MCF 10A (cell line): ENCODE measurements at regions of chr6 and their contacts with region 1.

Region 1: GRCh38 chr6:45714741-45715507 is 300.7 kb downstream of the CLIC5 start:
- DNase-seq: peak; percentile 87
- H3K4me3 Mint-ChIP-seq: no peak overlapping the region
- H3K27ac Mint-ChIP-seq: peak overlapping the region; percentile 13
- H3K4me1 Mint-ChIP-seq: peaks cover 11% of the 10 kb centered on the region
- H3K27me3 Mint-ChIP-seq: no peaks in the 10 kb centered on the region
- CTCF ChIP-seq: peak; percentile 87

Region 2: DNA sequence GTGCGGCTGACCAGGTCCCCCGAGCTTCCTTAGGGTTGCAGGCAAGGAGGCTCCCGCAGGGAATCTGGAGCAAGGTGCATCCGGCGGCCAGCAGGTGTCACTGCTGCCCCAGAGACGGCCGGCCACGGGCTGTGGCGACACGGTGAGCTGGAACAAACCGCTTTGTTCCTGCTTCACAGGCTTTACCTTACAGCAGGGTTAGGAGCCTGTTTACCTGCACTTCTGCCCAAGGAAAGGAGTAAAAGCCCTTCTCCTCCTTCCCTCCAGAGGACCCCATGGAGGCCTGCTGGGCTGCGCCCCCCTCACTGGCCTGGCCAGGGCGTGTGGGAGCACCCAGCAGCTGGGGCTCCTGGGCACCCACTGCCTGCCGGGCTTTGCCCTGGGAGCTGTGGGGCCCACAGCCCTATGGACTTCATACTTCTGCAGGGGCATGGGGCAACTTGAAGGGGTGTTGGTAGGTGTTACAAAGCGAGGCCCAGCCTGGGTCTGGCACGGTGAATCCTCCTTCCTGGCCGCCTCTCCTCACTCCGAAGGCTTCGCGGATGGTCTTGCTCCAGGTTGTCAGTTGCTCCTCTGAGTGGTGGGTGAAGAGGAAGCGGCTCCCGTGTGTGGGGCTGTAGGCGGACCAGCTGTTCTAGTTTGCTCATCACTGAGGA is 1239.0 kb before region 1 on chr6:
- CTCF ChIA-PET with region 1: interaction called, 20 read pairs
- POLR2A ChIA-PET with region 1: interaction called, 3 read pairs
- intact Hi-C with region 1: loop called (anchors 2 kb)
- DNase-seq: peak; percentile 76
- H3K4me3 Mint-ChIP-seq: no peak overlapping the region
- H3K27ac Mint-ChIP-seq: no peak overlapping the region
- H3K4me1 Mint-ChIP-seq: no peaks in the 10 kb centered on the region
- H3K27me3 Mint-ChIP-seq: no peaks in the 10 kb centered on the region
- CTCF ChIP-seq: peak; percentile 95

Region 3: DNA sequence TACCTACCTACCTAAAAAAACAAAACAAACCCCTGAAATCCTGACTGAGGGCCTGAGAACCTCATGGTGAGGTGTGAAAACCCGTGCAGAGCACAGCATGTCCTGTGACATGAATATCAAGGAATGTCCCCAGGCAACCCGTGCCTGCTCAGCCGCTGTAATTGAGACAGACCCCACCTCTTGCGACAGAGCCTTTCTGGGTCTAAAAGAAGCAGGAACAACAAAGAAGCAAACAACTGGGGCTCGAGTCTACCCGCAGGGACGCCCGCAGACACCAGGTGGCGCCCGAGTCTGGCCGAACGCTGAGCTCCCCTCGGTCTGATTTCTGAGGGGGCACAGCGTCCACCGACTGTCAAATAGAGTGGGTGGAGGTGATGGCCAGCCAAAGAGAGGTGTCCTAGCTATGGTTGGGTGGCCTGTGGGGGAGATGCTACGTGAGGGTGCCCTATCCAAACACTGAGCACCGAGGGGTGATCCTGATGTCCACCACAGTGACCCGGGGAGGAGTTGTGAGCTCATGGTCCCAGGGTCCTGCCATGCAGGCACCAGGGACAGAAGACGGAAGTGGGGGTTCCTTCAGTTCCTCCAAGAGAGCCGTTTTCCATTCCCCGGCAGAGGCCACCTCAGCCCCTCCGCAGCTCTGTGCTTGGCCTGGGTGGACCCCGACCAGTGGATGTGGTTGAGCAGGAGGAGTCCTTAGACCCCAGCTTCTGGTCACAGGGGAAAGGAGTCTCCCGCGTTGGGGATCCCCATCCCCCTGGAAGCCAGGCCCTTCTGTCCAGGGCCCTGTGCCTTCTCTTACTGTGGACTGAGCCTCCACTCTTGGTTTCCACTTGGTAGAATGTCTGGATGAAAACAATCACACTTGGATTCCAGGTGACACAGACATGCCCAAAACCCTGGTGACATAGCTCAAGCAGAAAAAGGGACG is 1059.2 kb before region 1 on chr6:
- CTCF ChIA-PET with region 1: interaction called, 48 read pairs
- POLR2A ChIA-PET with region 1: interaction called, 4 read pairs
- intact Hi-C with region 1: loop called (anchors 1 kb)
- DNase-seq: peak; percentile 66
- H3K4me3 Mint-ChIP-seq: peak overlapping the region; percentile 3
- H3K27ac Mint-ChIP-seq: peak overlapping the region; percentile 76
- H3K4me1 Mint-ChIP-seq: peaks cover 13% of the 10 kb centered on the region
- H3K27me3 Mint-ChIP-seq: no peaks in the 10 kb centered on the region
- CTCF ChIP-seq: peak; percentile 97

Region 4: DNA sequence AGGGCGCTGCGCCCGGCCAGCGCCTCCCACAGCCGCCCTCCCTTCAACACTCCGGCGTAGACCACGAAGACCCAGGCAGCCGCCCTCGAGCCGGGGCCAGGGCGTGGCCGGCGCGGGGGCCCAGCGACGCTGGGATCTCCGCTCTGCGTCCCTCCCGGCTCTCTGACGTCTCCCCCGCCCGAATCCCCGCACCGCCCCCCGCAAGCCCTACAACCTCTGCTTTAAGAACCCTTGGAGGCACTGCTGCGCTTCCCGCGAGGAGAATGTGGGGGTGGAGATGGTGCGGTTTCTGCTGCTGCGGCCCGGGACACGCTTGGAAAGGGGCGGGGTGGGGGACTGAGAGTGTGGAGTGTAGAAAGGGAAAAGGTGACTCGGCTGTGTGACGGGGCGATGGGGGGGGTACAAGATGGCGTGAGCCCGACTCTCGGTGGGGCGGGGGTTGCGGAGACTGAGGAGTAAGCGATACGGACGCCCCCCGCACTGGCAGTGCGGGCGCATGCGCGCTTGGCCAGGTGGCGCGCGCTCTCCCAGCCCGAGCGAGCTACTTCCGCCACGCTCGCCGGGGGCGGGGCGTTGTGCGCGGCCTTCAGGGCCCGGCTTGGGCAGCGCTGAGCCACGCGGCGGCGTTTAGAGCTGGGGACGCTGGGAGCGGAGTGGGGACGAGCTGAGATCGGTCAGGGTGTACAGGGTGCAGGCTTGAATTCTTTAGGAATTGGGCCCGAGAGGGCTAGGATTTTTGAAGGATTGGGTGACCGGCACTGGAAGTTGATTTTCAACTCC is 337.2 kb before region 1 on chr6 and contains the start of gene SUPT3H:
- CTCF ChIA-PET with region 1: no interaction called
- POLR2A ChIA-PET with region 1: interaction called, 6 read pairs
- intact Hi-C with region 1: loop called (anchors 5 kb)
- DNase-seq: peak; percentile 91
- H3K4me3 Mint-ChIP-seq: peak within 1 kb of the TSS; percentile 98
- H3K27ac Mint-ChIP-seq: peak within 1 kb of the TSS; percentile 98
- H3K4me1 Mint-ChIP-seq: peaks cover 24% of the 10 kb centered on the region
- H3K27me3 Mint-ChIP-seq: no peaks in the 10 kb centered on the region
- CTCF ChIP-seq: no peak
- total RNA-seq, gene SUPT3H: 12.7 and 14.4 TPM in 2 replicates

Region 5: DNA sequence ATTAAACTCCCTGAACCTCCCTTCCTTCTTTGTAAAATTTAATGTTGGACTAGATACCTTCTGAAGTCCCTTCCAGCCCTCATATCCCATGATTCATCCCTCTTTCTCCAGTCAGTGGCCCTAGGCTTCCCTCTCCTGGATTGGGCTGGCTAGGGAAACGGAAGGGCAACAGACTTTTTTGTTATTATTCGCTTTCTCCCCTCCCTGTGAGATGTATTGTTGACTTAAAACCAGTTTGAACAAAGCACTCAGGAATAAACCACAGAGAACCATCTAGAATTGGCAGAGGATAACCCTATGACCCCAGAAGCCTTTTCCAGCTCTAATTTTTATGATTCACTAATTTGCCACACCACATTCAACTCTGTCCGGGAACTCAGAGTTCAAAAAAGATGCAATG is 97.5 kb before region 1 on chr6:
- CTCF ChIA-PET with region 1: interaction called, 9 read pairs
- POLR2A ChIA-PET with region 1: no interaction called
- intact Hi-C with region 1: loop called (anchors 2 kb)
- DNase-seq: peak; percentile 66
- H3K4me3 Mint-ChIP-seq: no peak overlapping the region
- H3K27ac Mint-ChIP-seq: peak overlapping the region; percentile 40
- H3K4me1 Mint-ChIP-seq: peaks cover 16% of the 10 kb centered on the region
- H3K27me3 Mint-ChIP-seq: no peaks in the 10 kb centered on the region
- CTCF ChIP-seq: peak; percentile 14

Region 6: GRCh38 chr6:45922728-45923351 is 207.9 kb after region 1 on chr6:
- CTCF ChIA-PET with region 1: interaction called, 15 read pairs
- POLR2A ChIA-PET with region 1: no interaction called
- intact Hi-C with region 1: loop called (anchors 2 kb)
- DNase-seq: peak; percentile 73
- H3K4me3 Mint-ChIP-seq: no peak overlapping the region
- H3K27ac Mint-ChIP-seq: peak overlapping the region; percentile 39
- H3K4me1 Mint-ChIP-seq: peaks cover 6% of the 10 kb centered on the region
- H3K27me3 Mint-ChIP-seq: no peaks in the 10 kb centered on the region
- CTCF ChIP-seq: peak; percentile 64